GM10248 (cell line): ENCODE measurements at regions of chr11 and their contacts with region 1.

Region 1: DNA sequence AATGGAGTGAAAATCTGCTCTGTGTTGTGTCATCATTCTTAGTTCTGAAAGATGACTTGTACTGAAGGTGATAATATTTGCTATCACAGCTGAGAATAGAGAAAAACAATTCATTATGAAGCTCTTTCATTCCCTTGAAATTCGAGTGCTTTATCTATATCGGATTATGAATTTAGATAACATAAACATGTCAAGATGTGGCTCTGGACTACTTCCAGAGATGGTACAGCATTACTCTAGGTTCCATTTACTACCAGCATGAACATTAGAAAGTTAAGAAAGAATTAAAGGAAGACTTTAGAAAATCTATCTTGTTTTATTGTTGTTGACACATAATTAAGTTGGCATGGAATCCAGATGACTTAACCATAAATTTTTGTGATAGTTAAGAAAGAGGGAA is 182.4 kb downstream of the DDX10 start:
- DNase-seq: no peak
- CTCF ChIP-seq: no peak

Region 2: GRCh38 chr11:108835624-108836023 is 11.7 kb before region 1 on chr11:
- CTCF ChIA-PET with region 1: interaction called, 16 read pairs
- POLR2A ChIA-PET with region 1: no interaction called
- DNase-seq: no peak
- CTCF ChIP-seq: no peak